Activated CD4-positive, alpha-beta T cell treated with anti-CD3 and anti-CD28 coated beads, Interleukin-2, amount 10 ng/mL, durations not matched to agents 7 days and 5 days (primary cell): ENCODE measurements at regions of chr11 and their contacts with region 1.

Region 1: DNA sequence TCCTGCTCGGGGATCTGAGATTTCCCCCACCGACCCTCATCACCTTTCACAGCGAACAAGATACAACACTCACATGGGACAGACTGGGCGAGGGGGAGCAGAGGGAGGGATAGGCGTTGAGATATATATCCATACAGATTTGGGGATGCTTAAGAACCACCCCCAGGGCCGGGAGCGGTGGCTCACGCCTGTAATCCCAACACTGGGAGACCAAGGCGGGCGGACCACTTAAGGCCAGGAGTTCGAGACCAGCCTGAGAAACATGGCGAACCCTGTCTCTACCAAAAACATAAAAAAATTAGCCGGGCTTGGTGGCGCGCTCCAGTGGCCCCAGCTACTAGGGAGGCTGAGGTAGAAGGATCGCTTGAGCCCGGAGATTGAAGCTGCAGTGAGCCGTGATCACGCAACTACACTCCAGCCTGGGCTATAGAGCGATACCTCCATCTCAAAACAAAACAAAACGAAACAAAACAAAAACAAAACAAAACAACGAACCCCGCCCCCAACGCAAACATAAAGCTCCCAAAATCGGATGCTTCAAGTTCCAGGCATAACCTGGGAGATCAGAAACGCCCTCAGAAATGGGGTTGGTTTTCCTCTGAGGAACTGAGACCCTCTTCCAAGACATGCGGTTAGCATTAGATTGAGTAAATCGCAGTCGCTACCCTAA is 460 bp downstream of the LRRC51 start:
- DNase-seq: no peak
- H3K4me3 Mint-ChIP-seq: peak overlapping the region; percentile 90
- H3K27ac Mint-ChIP-seq: peak overlapping the region; percentile 96
- H3K4me1 Mint-ChIP-seq: peaks cover 53% of the 10 kb centered on the region
- H3K27me3 Mint-ChIP-seq: no peaks in the 10 kb centered on the region

Region 2: GRCh38 chr11:71580057-71581003 is 500.8 kb before region 1 on chr11:
- CTCF ChIA-PET with region 1: no interaction called
- POLR2A ChIA-PET with region 1: no interaction called
- DNase-seq: peak; percentile 27
- H3K4me3 Mint-ChIP-seq: no peak overlapping the region
- H3K27ac Mint-ChIP-seq: no peak overlapping the region
- H3K4me1 Mint-ChIP-seq: peaks cover 2% of the 10 kb centered on the region
- H3K27me3 Mint-ChIP-seq: peaks cover 13% of the 10 kb centered on the region

Region 3: GRCh38 chr11:72091005-72091691 is 10.0 kb after region 1 on chr11:
- CTCF ChIA-PET with region 1: interaction called, 31 read pairs
- POLR2A ChIA-PET with region 1: no interaction called
- DNase-seq: peak; percentile 76
- H3K4me3 Mint-ChIP-seq: no peak overlapping the region
- H3K27ac Mint-ChIP-seq: no peak overlapping the region
- H3K4me1 Mint-ChIP-seq: peaks cover 16% of the 10 kb centered on the region
- H3K27me3 Mint-ChIP-seq: no peaks in the 10 kb centered on the region

Region 4: GRCh38 chr11:72102946-72103753 is 22.0 kb after region 1 on chr11 and contains the start of gene LAMTOR1:
- CTCF ChIA-PET with region 1: interaction called, 31 read pairs
- POLR2A ChIA-PET with region 1: no interaction called
- DNase-seq: peak; percentile 99
- H3K4me3 Mint-ChIP-seq: peak within 1 kb of the TSS; percentile 86
- H3K27ac Mint-ChIP-seq: peak within 1 kb of the TSS; percentile 90
- H3K4me1 Mint-ChIP-seq: peaks cover 40% of the 10 kb centered on the region
- H3K27me3 Mint-ChIP-seq: no peaks in the 10 kb centered on the region
- total RNA-seq, gene LAMTOR1: 68.1 to 70.4 TPM